Activated T-helper 2 cell treated with anti-CD3 and anti-CD28 coated beads, Interferon-gamma antibody, Interleukin-2, Interleukin-4, amounts not matched to agents 10 μg/mL and 5 μg/mL and 100 μg/mL, durations not matched to agents 14 hours and 24 hours and 36 hours (primary cell): ENCODE measurements at regions of chr10 and their contacts with region 1.

Region 1: GRCh38 chr10:124461438-124462347 is at the start of gene LHPP:
- DNase-seq: peak; percentile 85
- H3K4me3 Mint-ChIP-seq: peak within 1 kb of the TSS; percentile 86
- H3K27ac Mint-ChIP-seq: peak within 1 kb of the TSS; percentile 92
- H3K4me1 Mint-ChIP-seq: peaks cover 22% of the 10 kb centered on the region
- H3K27me3 Mint-ChIP-seq: peaks cover 2% of the 10 kb centered on the region
- total RNA-seq, gene LHPP: 8.1 and 8.4 TPM in 2 replicates

Region 2: GRCh38 chr10:124231168-124232155 is 230.2 kb before region 1 on chr10:
- intact Hi-C with region 1: loop called (anchors 5 kb)
- DNase-seq: peak; percentile 66
- H3K4me3 Mint-ChIP-seq: no peak overlapping the region
- H3K27ac Mint-ChIP-seq: no peak overlapping the region
- H3K4me1 Mint-ChIP-seq: no peaks in the 10 kb centered on the region
- H3K27me3 Mint-ChIP-seq: no peaks in the 10 kb centered on the region

Region 3: DNA sequence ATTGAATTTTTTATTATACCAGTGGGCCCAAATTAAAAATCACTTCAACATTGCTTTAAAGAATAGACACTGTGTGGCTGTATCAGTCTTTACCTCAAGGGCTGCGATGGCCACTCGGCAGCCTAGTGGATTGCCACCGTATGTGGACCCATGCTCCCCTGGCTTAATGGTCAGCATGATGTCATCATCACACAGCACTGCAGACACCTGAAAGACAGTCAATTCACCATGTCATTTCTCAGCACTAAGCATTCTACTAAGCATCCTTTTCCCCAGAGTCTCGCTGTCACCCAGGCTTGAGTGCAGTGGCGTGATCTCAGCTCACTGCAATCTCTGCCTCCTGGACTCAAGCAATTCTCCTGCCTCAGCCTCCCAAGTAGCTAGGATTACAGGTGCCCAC is 60.1 kb before region 1 on chr10:
- intact Hi-C with region 1: no loop called
- DNase-seq: no peak
- H3K4me3 Mint-ChIP-seq: no peak overlapping the region
- H3K27ac Mint-ChIP-seq: no peak overlapping the region
- H3K4me1 Mint-ChIP-seq: peaks cover 10% of the 10 kb centered on the region
- H3K27me3 Mint-ChIP-seq: no peaks in the 10 kb centered on the region

Region 4: GRCh38 chr10:124418726-124419501 is 42.8 kb before region 1 on chr10 and contains the start of gene OAT:
- intact Hi-C with region 1: loop called (anchors 1 kb)
- DNase-seq: peak; percentile 93
- H3K4me3 Mint-ChIP-seq: peak within 1 kb of the TSS; percentile 81
- H3K27ac Mint-ChIP-seq: no peak within 1 kb of the TSS
- H3K4me1 Mint-ChIP-seq: peaks cover 8% of the 10 kb centered on the region
- H3K27me3 Mint-ChIP-seq: peaks cover 10% of the 10 kb centered on the region
- total RNA-seq, gene OAT: 42.6 and 45.8 TPM in 2 replicates

Region 5: DNA sequence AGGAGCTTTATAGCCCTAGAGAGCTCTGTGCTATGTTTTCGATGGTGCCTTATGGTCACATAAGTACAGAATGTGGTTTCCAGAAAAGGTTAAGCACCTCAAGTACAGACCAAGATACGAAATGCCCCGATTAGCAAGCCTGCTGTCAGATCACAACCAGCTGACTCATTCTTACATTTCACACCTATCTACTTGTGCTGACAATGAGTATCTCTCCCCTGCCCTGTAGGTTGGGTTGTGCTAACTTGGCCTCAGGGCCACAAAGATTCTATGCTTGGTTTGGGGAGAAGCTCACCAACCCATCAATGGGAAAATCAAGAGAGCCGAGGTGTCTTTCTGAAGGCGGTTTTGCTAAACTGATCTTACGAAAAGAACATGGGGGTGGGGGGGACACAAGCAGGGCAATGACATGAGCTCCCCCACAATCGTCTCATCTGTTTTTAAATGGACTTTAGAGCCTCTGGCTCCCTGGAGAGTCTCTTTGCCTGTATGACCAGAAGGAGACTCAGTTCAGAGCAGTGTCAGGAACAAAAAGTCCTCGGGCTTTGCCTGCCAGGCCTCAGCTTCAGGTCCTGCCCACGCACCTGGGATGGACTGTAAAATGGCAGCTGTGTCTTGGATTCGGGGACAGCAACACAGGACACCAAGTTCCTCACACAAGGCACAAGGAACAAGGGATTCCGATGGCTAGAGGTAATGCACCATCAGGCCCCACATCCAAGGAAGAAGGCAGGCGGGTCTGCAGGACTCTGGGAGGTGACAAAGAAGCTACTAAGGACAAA is 227.4 kb after region 1 on chr10:
- intact Hi-C with region 1: no loop called
- DNase-seq: peak; percentile 48
- H3K4me3 Mint-ChIP-seq: peak overlapping the region; percentile 26
- H3K27ac Mint-ChIP-seq: peak overlapping the region; percentile 80
- H3K4me1 Mint-ChIP-seq: peaks cover 69% of the 10 kb centered on the region
- H3K27me3 Mint-ChIP-seq: no peaks in the 10 kb centered on the region